ENCODE measurements at regions of chr15 and their contacts with region 1.

Region 1: DNA sequence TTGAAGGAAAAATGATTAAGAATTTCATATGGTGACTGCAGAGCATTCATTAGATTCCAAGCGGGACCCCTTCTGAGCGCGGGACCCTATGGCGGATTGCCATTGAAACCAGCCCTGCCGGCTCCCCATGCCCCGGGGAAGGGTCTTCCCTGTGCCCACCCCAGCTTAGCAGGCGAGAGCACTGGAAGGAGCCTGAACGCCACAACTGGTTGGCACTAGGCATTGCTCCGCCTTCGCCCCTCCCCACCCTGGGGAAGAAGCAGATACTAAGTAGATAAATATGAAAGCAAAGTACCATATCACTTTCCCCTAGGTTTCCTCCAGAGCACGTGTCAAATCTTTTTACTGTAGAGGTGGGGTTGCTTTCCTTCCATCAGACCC is 70.7 kb downstream of the CYP19A1 start:
- DNase-seq: no peak
- H3K4me3 ChIP-seq: peak overlapping the region; percentile 57
- H3K27ac ChIP-seq: no peak overlapping the region
- H3K27me3 ChIP-seq: peaks cover 61% of the 10 kb centered on the region
- CTCF ChIP-seq: no peak

Region 2: DNA sequence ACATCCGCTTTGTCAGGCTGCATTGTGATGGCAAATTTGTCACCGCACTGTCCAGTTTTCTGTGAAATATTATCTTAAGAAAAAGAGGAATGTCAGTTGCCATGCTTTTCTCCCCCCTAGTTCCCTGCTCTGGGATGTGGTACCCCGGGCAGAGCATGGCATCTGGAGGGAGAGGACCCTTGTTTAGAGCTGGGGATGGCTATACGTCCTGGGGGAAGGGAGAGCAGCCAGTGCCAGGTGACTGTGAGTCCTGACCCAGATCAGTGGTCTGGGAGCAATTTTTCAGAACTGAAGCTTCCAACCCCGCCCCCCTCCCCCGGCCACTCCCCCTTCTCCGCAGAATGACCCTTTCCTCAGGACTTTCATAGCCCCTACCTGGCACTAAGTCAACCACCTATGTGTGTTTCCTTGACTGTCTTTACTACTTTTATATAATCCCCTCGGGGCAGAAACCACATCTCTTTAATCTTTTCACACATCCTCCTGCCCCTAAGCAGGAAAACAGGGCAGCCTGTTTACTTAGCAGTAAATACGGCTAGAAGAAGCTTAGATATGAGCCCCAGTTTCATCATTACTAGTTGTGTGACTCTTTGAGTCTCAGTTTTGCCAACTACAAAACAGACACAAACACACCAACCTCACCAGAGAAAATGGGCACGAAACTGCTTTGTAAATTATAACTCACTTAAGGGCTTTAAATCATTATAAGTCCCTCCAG is 27.8 kb before region 1 on chr15:
- CTCF ChIA-PET with region 1: no interaction called
- POLR2A ChIA-PET with region 1: no interaction called
- DNase-seq: no peak
- H3K4me3 ChIP-seq: no peak overlapping the region
- H3K27ac ChIP-seq: no peak overlapping the region
- H3K27me3 ChIP-seq: peaks cover 21% of the 10 kb centered on the region
- CTCF ChIP-seq: no peak

Region 3: DNA sequence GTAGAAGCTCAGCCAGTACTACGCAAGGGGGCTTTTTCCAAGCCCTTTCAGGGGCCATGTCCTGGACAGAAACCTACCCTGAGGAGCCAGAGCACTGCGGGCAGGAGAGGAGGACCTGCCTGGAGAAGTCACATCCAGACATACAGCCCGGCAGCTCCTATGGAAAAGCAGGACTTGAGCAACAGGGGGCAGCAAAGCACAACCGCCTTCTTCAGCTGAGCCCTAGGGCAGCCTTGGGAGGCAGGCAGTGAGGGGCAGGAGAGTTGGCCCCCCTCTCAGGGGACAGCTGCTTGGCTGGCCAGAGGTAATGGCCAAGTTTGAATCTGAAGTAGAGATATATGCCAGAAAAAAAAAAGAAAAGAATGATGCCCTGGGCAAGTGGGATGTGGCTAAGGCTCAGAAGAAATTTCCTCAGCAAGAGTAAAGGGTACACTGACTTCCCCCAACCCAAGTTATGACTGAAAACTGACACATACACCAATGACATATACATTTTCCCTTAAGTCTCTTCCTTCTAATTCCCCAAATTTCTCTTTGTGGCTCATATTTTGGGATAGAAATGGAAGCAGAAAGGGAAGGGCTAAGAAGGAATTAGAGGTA is 13.8 kb after region 1 on chr15:
- CTCF ChIA-PET with region 1: interaction called, 11 read pairs
- POLR2A ChIA-PET with region 1: no interaction called
- DNase-seq: no peak
- H3K4me3 ChIP-seq: no peak overlapping the region
- H3K27ac ChIP-seq: no peak overlapping the region
- H3K27me3 ChIP-seq: peaks cover 31% of the 10 kb centered on the region
- CTCF ChIP-seq: peak; percentile 88

Region 4: GRCh38 chr15:51310097-51310501 is 42.4 kb after region 1 on chr15:
- CTCF ChIA-PET with region 1: no interaction called
- POLR2A ChIA-PET with region 1: no interaction called
- DNase-seq: no peak
- H3K4me3 ChIP-seq: no peak overlapping the region
- H3K27ac ChIP-seq: no peak overlapping the region
- H3K27me3 ChIP-seq: peaks cover 12% of the 10 kb centered on the region
- CTCF ChIP-seq: no peak

Region 5: GRCh38 chr15:51343481-51343880 is 75.8 kb after region 1 on chr15:
- CTCF ChIA-PET with region 1: no interaction called
- POLR2A ChIA-PET with region 1: no interaction called
- DNase-seq: no peak
- H3K4me3 ChIP-seq: no peak overlapping the region
- H3K27ac ChIP-seq: no peak overlapping the region
- H3K27me3 ChIP-seq: peaks cover 58% of the 10 kb centered on the region
- CTCF ChIP-seq: no peak

Measured in AG04450 (cell line).